CD8-positive, alpha-beta memory T cell (primary cell): ENCODE measurements at regions of chrX and their contacts with region 1.

Region 1: DNA sequence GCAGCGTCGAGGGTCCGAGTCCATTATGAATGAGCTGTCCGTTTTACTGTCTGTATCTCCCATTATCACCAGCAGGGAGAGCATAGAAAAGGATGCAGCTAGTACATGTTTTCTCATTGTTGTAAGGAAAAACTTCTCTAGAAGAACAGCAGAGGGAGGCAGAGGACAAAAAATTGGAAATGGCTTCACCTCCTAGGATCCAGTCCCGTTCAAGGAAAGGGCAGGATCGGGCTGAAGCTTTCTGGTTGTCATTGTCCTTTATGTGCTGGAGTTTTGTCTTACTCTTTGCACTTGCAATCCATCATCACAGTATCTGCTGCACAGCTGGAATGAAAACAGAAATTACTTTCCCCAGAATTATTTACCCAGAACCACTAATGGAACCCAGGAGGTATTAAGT is 14.7 kb downstream of the NDP start:
- DNase-seq: peak in 4 of 5 donors; percentile 1 to 47 (median 39)
- H3K4me3 ChIP-seq: no peak overlapping the region
- H3K4me3 Mint-ChIP-seq: no peak overlapping the region
- H3K27ac ChIP-seq: no peak overlapping the region
- H3K27ac Mint-ChIP-seq: peak overlapping the region in 2 of 8 donors; percentile 1 to 15
- H3K4me1 ChIP-seq: no peaks in the 10 kb centered on the region
- H3K4me1 Mint-ChIP-seq: peaks cover 3 to 7% (median 5%) of the 10 kb centered on the region in 3 donors
- H3K27me3 ChIP-seq: no peaks in the 10 kb centered on the region
- H3K27me3 Mint-ChIP-seq: peaks cover 5 to 14% of the 10 kb centered on the region in 2 donors

Region 2: DNA sequence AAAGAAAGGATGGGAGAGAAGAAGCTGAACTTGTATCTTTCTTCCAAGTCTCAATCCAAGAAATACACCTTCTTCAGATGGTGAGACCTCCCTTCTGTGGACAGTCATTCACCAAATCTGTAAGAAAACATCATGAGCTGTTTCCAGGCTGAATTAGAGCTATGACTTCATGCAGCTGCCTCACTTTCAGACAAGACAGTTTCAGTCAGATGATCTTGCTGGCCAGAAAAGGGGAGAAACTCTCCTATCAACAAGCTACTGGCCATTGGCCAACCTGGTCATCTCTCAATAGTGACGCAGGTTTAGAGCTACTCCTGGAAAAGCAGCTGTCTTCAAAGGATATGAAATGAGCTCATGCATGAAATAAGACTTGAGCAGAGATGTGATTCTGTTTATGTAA is 84.2 kb after region 1 on chrX:
- CTCF ChIA-PET with region 1: no interaction called
- POLR2A ChIA-PET with region 1: no interaction called
- DNase-seq: no peak
- H3K4me3 ChIP-seq: no peak overlapping the region
- H3K4me3 Mint-ChIP-seq: no peak overlapping the region
- H3K27ac ChIP-seq: no peak overlapping the region
- H3K27ac Mint-ChIP-seq: no peak overlapping the region
- H3K4me1 ChIP-seq: no peaks in the 10 kb centered on the region
- H3K4me1 Mint-ChIP-seq: no peaks in the 10 kb centered on the region
- H3K27me3 ChIP-seq: no peaks in the 10 kb centered on the region
- H3K27me3 Mint-ChIP-seq: peaks cover 8 to 10% of the 10 kb centered on the region in 2 donors

Region 3: GRCh38 chrX:44244008-44244407 is 285.5 kb after region 1 on chrX:
- CTCF ChIA-PET with region 1: interaction called, 23 read pairs
- POLR2A ChIA-PET with region 1: no interaction called
- DNase-seq: peak in 2 of 5 donors; percentile 20 to 39
- H3K4me3 ChIP-seq: no peak overlapping the region
- H3K4me3 Mint-ChIP-seq: peak overlapping the region in 1 of 7 donors; percentile 54
- H3K27ac ChIP-seq: no peak overlapping the region
- H3K27ac Mint-ChIP-seq: peak overlapping the region in 2 of 8 donors; percentile 24 to 60
- H3K4me1 ChIP-seq: peaks cover 15% of the 10 kb centered on the region
- H3K4me1 Mint-ChIP-seq: peaks cover 13 to 26% (median 20%) of the 10 kb centered on the region in 3 donors
- H3K27me3 ChIP-seq: no peaks in the 10 kb centered on the region
- H3K27me3 Mint-ChIP-seq: peaks cover 0 to 3% of the 10 kb centered on the region in 2 donors